ENCODE measurements at regions of chr3 and their contacts with region 1.

Region 1: DNA sequence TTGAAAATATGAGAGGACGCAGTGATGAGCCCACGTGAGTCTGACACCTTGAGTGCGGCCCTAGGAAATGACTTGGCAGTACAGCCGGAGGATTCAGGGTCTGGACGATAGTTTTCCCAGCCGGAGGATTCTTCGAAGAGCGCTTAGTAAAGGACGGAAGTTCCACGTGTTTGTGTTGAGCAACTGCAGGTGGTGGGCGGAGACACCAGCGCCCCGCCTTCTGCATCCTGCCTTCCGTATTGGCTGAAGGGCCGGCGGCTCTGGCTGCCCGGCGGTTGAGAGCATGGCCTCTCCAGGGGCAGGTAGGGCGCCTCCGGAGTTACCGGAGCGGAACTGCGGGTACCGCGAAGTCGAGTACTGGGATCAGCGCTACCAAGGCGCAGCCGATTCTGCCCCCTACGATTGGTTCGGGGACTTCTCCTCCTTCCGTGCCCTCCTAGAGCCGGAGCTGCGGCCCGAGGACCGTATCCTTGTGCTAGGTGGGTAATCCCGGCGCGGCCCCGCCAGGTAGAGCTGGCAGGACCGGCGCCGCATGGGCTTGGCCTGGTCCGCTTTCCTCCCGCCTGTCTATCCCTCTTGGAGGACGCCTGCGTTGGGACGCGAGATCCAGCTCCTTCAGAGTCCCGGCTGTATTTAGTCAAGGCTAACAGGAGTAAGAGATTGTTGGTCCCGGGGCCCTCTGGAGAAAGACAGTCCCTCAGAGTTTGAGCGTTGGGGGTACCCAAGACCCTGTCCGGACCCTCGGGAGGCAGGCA is at the start of gene EEF1AKMT4:
- DNase-seq: peak; percentile 97
- CTCF ChIP-seq: peak; percentile 25

Region 2: GRCh38 chr3:183884427-183885296 is 364.9 kb before region 1 on chr3 and contains the start of gene PARL:
- in situ Hi-C with region 1: loop called (anchors 25 kb)
- DNase-seq: peak; percentile 92
- CTCF ChIP-seq: peak; percentile 98